ENCODE measurements at regions of chr2 and their contacts with region 1.

Region 1: GRCh38 chr2:222976521-222977076 is 75.4 kb upstream of the KCNE4 start:
- DNase-seq: no peak
- H3K4me3 ChIP-seq: no peak overlapping the region
- H3K27ac ChIP-seq: no peak overlapping the region
- H3K4me1 ChIP-seq: no peaks in the 10 kb centered on the region
- H3K27me3 ChIP-seq: no peaks in the 10 kb centered on the region
- CTCF ChIP-seq: no peak
- EP300 ChIP-seq: no peak
- POLR2A ChIP-seq: no peak

Region 2: GRCh38 chr2:223142153-223142552 is 165.6 kb after region 1 on chr2:
- intact Hi-C with region 1: no loop called
- DNase-seq: no peak
- H3K4me3 ChIP-seq: no peak overlapping the region
- H3K27ac ChIP-seq: no peak overlapping the region
- H3K4me1 ChIP-seq: no peaks in the 10 kb centered on the region
- H3K27me3 ChIP-seq: no peaks in the 10 kb centered on the region
- CTCF ChIP-seq: no peak
- EP300 ChIP-seq: no peak
- POLR2A ChIP-seq: no peak

Region 3: GRCh38 chr2:223601932-223602666 is 625.5 kb after region 1 on chr2 and contains the start of gene SCG2:
- intact Hi-C with region 1: loop called in 2 of 4 experiments (anchors 10 kb)
- DNase-seq: peak; percentile 67 to 84 (median 81)
- H3K4me3 ChIP-seq: no peak within 1 kb of the TSS
- H3K27ac ChIP-seq: no peak within 1 kb of the TSS
- H3K4me1 ChIP-seq: no peaks in the 10 kb centered on the region
- H3K27me3 ChIP-seq: no peaks in the 10 kb centered on the region
- CTCF ChIP-seq: peak in 2 of 3 donors; percentile 23 to 27
- EP300 ChIP-seq: no peak
- POLR2A ChIP-seq: no peak
- total RNA-seq, gene SCG2: 0.18 to 6.3 (median 2.6) TPM